CD4-positive, alpha-beta memory T cell (primary cell): ENCODE measurements at regions of chr5 and their contacts with region 1.

Region 1: DNA sequence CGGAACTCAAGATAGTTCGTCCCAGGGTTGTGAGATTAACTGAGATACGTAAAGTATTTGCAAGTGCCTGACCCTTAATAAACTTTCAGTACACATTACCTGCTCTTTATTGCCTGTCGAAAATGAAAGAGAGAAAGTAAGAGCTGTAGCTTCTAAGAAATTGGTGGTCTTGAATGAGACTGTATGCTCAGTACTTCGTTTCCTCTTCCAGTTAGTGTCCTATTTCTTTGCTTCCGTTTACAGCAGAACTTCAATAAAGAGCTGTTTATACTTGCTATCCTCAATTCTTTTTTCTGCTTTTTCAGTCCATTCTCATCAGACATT is 534 bp downstream of the SRFBP1 start:
- DNase-seq: peak in 1 of 5 donors; percentile 23
- H3K4me3 ChIP-seq: peak overlapping the region; percentile 85 to 89
- H3K4me3 Mint-ChIP-seq: peak overlapping the region; percentile 92 to 100 (median 98)
- H3K27ac ChIP-seq: peak overlapping the region; percentile 62
- H3K27ac Mint-ChIP-seq: peak overlapping the region; percentile 92 to 100 (median 98)
- H3K4me1 ChIP-seq: peaks cover 19% of the 10 kb centered on the region
- H3K4me1 Mint-ChIP-seq: peaks cover 26 to 50% (median 42%) of the 10 kb centered on the region in 4 donors
- H3K27me3 ChIP-seq: no peaks in the 10 kb centered on the region
- H3K27me3 Mint-ChIP-seq: peaks cover under 1 to 11% of the 10 kb centered on the region in 2 donors

Region 2: DNA sequence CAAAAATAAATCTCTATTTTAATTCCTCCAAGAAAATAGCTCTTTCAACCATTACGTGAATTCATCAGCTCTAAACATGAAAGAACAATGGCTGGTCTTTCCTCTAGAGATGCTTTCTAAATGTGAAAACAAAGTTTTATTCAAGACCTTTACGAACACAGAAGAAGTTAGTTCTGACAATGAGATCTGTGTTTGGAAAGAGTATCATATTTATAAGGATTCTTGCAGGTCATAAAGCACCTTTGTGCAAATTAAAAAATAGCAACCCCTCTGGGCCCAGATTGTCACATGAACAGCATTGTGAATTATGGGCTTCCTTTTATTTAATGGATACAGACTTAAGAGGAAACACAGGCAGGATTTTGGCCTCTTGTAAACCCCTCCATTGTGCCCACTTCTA is 128.3 kb before region 1 on chr5:
- CTCF ChIA-PET with region 1: no interaction called
- POLR2A ChIA-PET with region 1: no interaction called
- intact Hi-C with region 1: no loop called
- DNase-seq: no peak
- H3K4me3 ChIP-seq: no peak overlapping the region
- H3K4me3 Mint-ChIP-seq: no peak overlapping the region
- H3K27ac ChIP-seq: no peak overlapping the region
- H3K27ac Mint-ChIP-seq: no peak overlapping the region
- H3K4me1 ChIP-seq: no peaks in the 10 kb centered on the region
- H3K4me1 Mint-ChIP-seq: no peaks in the 10 kb centered on the region
- H3K27me3 ChIP-seq: no peaks in the 10 kb centered on the region
- H3K27me3 Mint-ChIP-seq: peaks cover 0 to 2% of the 10 kb centered on the region in 2 donors

Region 3: GRCh38 chr5:121949867-121950266 is 12.4 kb before region 1 on chr5:
- CTCF ChIA-PET with region 1: interaction called, 26 read pairs
- POLR2A ChIA-PET with region 1: interaction called, 16 read pairs
- intact Hi-C with region 1: no loop called
- DNase-seq: peak in 1 of 5 donors; percentile 9
- H3K4me3 ChIP-seq: no peak overlapping the region
- H3K4me3 Mint-ChIP-seq: no peak overlapping the region
- H3K27ac ChIP-seq: no peak overlapping the region
- H3K27ac Mint-ChIP-seq: no peak overlapping the region
- H3K4me1 ChIP-seq: no peaks in the 10 kb centered on the region
- H3K4me1 Mint-ChIP-seq: no peaks in the 10 kb centered on the region
- H3K27me3 ChIP-seq: no peaks in the 10 kb centered on the region
- H3K27me3 Mint-ChIP-seq: peaks cover 4 to 8% of the 10 kb centered on the region in 2 donors